ENCODE measurements at regions of chr7 and their contacts with region 1.

Region 1: GRCh38 chr7:151519765-151520418 is at the start of gene RHEB:
- DNase-seq: peak; percentile 99
- H3K4me3 Mint-ChIP-seq: peak within 1 kb of the TSS; percentile 89
- H3K27ac Mint-ChIP-seq: peak within 1 kb of the TSS; percentile 96
- H3K4me1 Mint-ChIP-seq: peaks cover 27% of the 10 kb centered on the region
- H3K27me3 Mint-ChIP-seq: no peaks in the 10 kb centered on the region
- CTCF ChIP-seq: no peak
- total RNA-seq, gene RHEB: 135 and 151 TPM in 2 replicates

Region 2: DNA sequence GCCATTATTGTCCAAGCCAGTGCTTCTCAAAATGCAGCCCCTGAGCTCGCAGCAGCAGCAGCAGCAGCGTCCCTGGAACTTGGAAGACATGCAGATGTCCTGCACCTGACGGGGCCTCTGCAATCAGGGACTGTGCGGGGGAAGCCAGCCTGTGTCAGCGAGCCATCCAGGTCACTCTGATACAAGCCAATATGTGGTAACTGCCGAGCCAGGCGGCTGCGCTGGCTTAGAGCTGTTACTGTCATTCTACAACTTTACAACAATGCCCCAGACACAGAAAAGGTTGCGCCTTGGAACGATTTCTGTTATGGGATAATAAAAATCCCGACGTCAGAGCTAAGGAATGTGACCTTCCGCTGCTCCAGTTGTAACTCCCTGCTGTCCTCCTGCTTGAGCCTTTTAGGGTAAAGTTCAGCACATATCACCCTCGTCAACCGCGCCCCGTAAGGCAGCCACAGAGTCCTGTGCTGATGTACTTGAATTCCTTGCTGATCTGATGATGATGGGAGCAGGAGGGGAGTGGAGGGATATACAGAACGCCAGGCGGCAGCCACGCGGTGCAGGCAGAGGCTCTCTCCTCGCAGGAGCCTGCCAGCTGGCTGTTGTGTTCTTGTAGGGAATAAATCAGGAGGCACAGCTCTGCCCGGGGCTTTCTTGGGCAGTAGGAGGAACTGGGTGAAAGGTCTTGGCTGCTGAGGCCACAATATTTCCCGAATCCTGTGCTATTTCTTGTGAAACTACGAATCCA is 60.0 kb before region 1 on chr7:
- CTCF ChIA-PET with region 1: interaction called, 5 read pairs
- POLR2A ChIA-PET with region 1: interaction called, 20 read pairs
- intact Hi-C with region 1: loop called (anchors 1 kb)
- DNase-seq: peak; percentile 85
- H3K4me3 Mint-ChIP-seq: peak overlapping the region; percentile 65
- H3K27ac Mint-ChIP-seq: peak overlapping the region; percentile 76
- H3K4me1 Mint-ChIP-seq: peaks cover 16% of the 10 kb centered on the region
- H3K27me3 Mint-ChIP-seq: no peaks in the 10 kb centered on the region
- CTCF ChIP-seq: peak; percentile 24

Region 3: GRCh38 chr7:151481650-151482505 is 38.0 kb before region 1 on chr7:
- CTCF ChIA-PET with region 1: no interaction called
- POLR2A ChIA-PET with region 1: interaction called, 10 read pairs
- intact Hi-C with region 1: no loop called
- DNase-seq: no peak
- H3K4me3 Mint-ChIP-seq: no peak overlapping the region
- H3K27ac Mint-ChIP-seq: no peak overlapping the region
- H3K4me1 Mint-ChIP-seq: peaks cover 24% of the 10 kb centered on the region
- H3K27me3 Mint-ChIP-seq: no peaks in the 10 kb centered on the region
- CTCF ChIP-seq: no peak

Region 4: GRCh38 chr7:151491859-151492258 is 28.0 kb before region 1 on chr7:
- CTCF ChIA-PET with region 1: interaction called, 3 read pairs
- POLR2A ChIA-PET with region 1: interaction called, 15 read pairs
- intact Hi-C with region 1: loop called (anchors 1 kb)
- DNase-seq: peak; percentile 86
- H3K4me3 Mint-ChIP-seq: no peak overlapping the region
- H3K27ac Mint-ChIP-seq: peak overlapping the region; percentile 85
- H3K4me1 Mint-ChIP-seq: peaks cover 20% of the 10 kb centered on the region
- H3K27me3 Mint-ChIP-seq: no peaks in the 10 kb centered on the region
- CTCF ChIP-seq: no peak

Region 5: DNA sequence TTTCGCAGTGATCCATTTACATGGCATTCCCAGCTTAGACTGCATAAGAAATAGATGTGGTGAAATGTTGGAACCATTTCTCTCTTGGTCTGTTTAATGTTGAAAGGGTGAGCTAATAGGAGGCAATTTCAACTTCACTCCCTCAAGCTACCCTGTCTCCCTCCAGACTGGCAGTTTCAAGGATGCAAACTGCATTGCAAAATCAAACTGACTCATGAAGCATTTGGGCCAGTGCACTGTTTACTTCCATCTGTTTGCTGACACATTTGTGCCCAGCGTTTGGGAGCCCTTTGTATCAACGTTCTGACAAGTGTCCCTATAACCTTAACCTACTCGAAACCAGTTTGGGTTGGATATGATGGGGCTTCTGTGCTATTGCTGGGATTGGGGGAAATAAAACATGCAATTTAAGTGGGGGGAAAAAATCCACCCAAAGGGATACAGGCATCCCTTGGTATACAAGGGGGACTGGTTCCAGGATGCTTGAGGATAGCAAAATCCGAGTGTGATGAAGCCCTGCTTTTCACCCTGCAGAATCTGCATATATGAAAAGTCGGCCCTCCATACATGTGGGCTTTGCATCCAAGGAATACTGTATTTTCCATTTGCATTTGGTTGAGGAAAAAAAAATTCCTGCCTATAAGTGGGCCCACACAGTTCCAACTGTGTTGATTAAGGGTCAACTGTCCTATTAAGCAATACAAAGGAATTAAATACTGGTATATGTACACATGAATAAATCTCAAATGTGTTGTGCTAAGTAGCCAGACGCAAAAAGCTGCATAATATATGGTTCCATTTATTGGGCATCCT is 15.8 kb before region 1 on chr7:
- CTCF ChIA-PET with region 1: interaction called, 6 read pairs
- POLR2A ChIA-PET with region 1: interaction called, 141 read pairs
- intact Hi-C with region 1: loop called (anchors 2 kb)
- DNase-seq: peak; percentile 95
- H3K4me3 Mint-ChIP-seq: peak overlapping the region; percentile 48
- H3K27ac Mint-ChIP-seq: peak overlapping the region; percentile 58
- H3K4me1 Mint-ChIP-seq: peaks cover 18% of the 10 kb centered on the region
- H3K27me3 Mint-ChIP-seq: no peaks in the 10 kb centered on the region
- CTCF ChIP-seq: no peak

Region 6: GRCh38 chr7:151550656-151551286 is 30.9 kb after region 1 on chr7:
- CTCF ChIA-PET with region 1: interaction called, 4 read pairs
- POLR2A ChIA-PET with region 1: interaction called, 19 read pairs
- intact Hi-C with region 1: no loop called
- DNase-seq: peak; percentile 37
- H3K4me3 Mint-ChIP-seq: no peak overlapping the region
- H3K27ac Mint-ChIP-seq: no peak overlapping the region
- H3K4me1 Mint-ChIP-seq: peaks cover 25% of the 10 kb centered on the region
- H3K27me3 Mint-ChIP-seq: peaks cover 20% of the 10 kb centered on the region
- CTCF ChIP-seq: no peak

Measured in MCF 10A (cell line).